A673 (cell line): ENCODE measurements at regions of chr2 and their contacts with region 1.

Region 1: DNA sequence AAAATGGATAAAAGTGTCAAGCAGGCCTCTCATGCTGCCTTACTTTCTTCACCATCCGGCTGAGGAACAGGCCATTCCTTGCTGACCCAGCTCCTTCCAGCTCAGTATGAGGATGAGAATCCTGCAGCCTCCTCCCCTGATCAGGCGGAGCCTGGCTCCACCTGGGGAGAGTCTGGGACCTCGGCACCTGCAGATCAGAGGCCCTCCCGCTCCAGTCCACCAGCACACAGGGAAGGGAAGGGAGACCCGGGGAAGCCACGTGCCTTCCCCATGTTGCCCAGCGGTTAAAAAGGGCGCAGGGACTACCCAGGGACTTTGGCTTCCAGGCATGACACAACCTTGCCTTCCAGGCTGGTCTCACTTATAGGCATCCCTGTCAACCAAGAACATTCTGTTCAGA is 172.0 kb downstream of the NDUFA10 start:
- DNase-seq: no peak
- H3K4me3 ChIP-seq: no peak overlapping the region
- H3K27ac ChIP-seq: no peak overlapping the region
- H3K4me1 ChIP-seq: no peaks in the 10 kb centered on the region
- H3K27me3 ChIP-seq: peaks cover 4% of the 10 kb centered on the region
- CTCF ChIP-seq: no peak

Region 2: DNA sequence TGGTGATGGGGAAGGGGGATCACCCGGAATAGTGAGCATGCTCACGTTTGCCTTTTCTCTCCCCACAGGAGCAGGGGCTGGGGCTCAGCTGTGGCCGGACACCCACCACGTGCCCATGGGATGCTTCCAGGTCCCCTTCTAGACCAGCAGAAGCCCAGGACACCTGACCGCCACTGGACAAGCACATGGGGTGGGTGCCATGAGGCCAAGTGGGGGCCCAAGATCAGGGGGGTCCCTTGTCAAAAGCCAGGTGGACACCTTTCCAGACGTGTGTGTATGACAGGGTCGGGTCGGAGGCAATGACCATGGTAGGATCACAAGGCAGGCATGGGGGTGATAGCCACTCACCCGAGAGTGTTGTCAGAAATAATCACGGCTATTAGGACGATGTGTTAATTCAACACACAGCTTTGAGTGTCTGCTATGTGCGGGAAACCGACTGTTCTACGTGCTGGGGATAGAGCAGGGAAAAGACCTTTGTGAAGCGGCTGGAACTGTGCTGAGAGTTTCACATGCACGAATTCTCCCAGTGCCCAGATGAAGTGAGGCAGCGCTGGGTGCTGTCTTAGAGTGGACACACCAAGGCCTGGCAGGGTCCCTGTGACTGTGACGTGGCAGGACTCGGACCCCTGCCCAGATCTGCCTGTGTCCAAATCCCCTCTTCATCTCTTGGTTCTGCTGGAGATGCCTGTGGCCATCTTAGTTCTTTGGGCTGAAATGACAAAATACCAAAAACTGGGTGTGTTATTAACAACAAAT is 72.7 kb before region 1 on chr2:
- CTCF ChIA-PET with region 1: no interaction called
- POLR2A ChIA-PET with region 1: no interaction called
- intact Hi-C with region 1: no loop called
- DNase-seq: no peak
- H3K4me3 ChIP-seq: no peak overlapping the region
- H3K27ac ChIP-seq: no peak overlapping the region
- H3K4me1 ChIP-seq: peaks cover 4% of the 10 kb centered on the region
- H3K27me3 ChIP-seq: peaks cover 19% of the 10 kb centered on the region
- CTCF ChIP-seq: no peak

Region 3: DNA sequence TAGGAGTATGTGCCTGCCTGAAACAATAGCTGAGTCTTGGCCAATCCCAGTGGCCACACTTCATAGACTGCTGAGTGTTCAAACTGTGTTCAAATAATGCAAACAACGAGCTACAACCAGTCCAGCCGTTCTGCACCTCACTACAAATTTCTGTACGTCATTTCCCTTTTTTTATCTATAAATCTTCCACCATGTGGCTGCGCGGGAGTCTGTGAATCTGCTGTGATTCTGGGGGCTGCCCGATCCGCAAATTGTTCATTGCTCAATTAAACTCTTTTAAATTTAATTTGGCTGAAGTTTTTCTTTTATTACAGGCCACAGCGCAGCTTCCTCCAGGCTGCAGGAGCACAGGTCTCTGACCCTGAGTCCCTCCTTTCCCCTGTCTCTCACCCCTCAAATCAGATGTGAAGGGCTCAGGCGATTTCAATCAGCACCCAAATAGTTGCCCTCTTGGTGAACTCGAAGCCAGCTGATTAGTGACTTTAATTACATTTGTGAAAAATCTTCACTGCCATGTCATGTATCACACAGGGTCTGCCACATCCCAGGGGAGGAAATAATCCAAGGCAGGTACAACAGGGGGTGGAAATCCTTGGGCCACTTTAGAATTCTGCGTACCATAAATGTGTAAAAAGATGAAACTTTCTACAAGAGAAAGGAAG is 26.4 kb after region 1 on chr2:
- CTCF ChIA-PET with region 1: no interaction called
- POLR2A ChIA-PET with region 1: interaction called, 14 read pairs
- intact Hi-C with region 1: no loop called
- DNase-seq: no peak
- H3K4me3 ChIP-seq: no peak overlapping the region
- H3K27ac ChIP-seq: no peak overlapping the region
- H3K4me1 ChIP-seq: no peaks in the 10 kb centered on the region
- H3K27me3 ChIP-seq: no peaks in the 10 kb centered on the region
- CTCF ChIP-seq: no peak